ENCODE measurements at regions of chr15 and their contacts with region 1.

Region 1: DNA sequence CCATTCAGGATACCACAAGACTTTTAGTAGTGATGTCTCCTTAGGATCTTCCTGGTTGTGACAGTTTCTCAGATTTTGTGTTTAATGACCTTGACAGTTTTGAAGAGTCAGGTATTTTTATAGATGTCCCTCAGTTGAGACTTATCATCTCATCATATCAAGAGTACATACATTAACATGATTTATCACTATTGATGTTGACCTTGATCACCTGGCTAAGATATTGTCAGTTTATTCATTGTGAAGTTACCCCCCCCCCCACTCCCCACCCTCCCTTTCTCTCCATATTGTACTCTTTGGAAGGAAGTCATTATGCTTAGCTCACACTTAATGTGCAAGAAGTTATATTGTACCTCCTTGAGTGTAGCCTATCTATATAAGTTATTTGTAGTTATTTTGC is 42.9 kb downstream of the MGA start:
- DNase-seq: no peak
- ATAC-seq: no peak
- H3K4me3 ChIP-seq: no peak overlapping the region
- H3K27ac ChIP-seq: no peak overlapping the region
- H3K4me1 ChIP-seq: no peaks in the 10 kb centered on the region
- H3K27me3 ChIP-seq: no peaks in the 10 kb centered on the region
- CTCF ChIP-seq: no peak

Region 2: DNA sequence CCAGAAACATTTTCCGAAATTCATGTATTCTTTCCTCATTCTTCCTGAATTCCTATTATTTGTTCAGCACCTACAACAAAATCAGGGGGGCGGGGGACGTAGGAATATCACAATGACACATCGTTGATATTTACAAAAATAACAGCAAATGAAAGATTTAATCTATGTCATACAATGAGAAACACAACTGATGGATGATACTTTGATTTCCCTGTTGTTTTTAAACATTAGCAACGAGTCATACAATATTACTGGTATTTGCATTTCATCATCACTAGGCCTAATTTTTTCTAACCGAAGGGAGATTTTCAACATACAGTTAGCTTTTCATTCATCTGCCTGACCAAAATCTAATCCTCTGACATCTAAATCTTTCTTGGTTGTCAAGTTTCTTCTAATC is 541.8 kb before region 1 on chr15:
- intact Hi-C with region 1: no loop called
- DNase-seq: no peak
- ATAC-seq: no peak
- H3K4me3 ChIP-seq: no peak overlapping the region
- H3K27ac ChIP-seq: no peak overlapping the region
- H3K4me1 ChIP-seq: no peaks in the 10 kb centered on the region
- H3K27me3 ChIP-seq: peaks cover 0 to 8% (median 0%) of the 10 kb centered on the region in 7 donors
- CTCF ChIP-seq: no peak

Region 3: DNA sequence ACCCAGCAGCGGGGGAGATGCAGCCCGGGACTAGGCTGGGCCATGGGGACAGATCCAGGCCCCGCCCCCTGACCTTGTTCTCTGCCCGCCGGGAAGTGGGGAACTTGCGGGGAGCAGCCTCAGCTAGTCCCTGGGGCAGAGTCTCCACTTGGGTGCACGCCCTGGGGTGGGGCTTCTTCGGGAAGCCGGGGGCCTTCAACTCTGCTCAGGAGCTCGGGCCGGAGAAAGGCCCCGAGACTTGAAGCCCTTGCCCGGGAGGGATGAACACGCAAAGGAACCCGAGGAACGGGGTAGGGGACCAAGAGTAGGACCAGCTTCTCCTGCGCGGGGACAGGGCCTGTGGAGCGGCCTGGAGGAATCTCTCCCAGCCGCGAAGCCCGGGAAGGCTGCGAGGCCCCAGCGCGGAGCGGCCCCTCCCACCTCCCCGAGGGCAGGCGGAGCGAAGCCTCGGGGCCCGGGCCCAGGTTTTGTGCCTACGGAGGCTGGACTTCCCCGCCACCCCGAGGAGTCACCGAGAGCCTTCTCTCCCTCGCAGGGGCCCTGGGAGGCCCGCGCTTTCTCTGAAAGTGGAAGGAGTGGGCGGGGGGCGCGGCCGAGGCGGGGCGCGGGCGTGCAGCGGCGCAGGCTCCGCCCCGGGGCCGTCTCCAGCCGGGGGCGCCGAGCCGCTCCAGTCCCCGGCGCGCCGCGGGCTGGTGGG is 209.8 kb before region 1 on chr15 and contains the start of gene ITPKA:
- intact Hi-C with region 1: loop called in 1 of 10 experiments (anchors 5 kb)
- DNase-seq: peak; percentile 61 to 73
- ATAC-seq: peak; percentile 74 to 88 (median 81)
- H3K4me3 ChIP-seq: peak within 1 kb of the TSS; percentile 48 to 91 (median 70)
- H3K27ac ChIP-seq: peak within 1 kb of the TSS in 7 of 10 donors; percentile 21 to 70 (median 55)
- H3K4me1 ChIP-seq: peaks cover 7 to 41% (median 34%) of the 10 kb centered on the region in 9 donors
- H3K27me3 ChIP-seq: peaks cover 7 to 77% (median 56%) of the 10 kb centered on the region in 7 donors
- CTCF ChIP-seq: peak in 1 of 9 donors; percentile 7
- total RNA-seq, gene ITPKA: 0.55 to 6.8 (median 1.5) TPM

Measured in heart right ventricle (tissue), 16 donors.